KBM-7 (cell line): ENCODE measurements at regions of chr3 and their contacts with region 1.

Region 1: GRCh38 chr3:149969940-149970715 is 567 bp downstream of the PFN2 start:
- DNase-seq: peak; percentile 79

Region 2: GRCh38 chr3:150194513-150194912 is 224.4 kb after region 1 on chr3:
- in situ Hi-C with region 1: no loop called
- DNase-seq: no peak

Region 3: DNA sequence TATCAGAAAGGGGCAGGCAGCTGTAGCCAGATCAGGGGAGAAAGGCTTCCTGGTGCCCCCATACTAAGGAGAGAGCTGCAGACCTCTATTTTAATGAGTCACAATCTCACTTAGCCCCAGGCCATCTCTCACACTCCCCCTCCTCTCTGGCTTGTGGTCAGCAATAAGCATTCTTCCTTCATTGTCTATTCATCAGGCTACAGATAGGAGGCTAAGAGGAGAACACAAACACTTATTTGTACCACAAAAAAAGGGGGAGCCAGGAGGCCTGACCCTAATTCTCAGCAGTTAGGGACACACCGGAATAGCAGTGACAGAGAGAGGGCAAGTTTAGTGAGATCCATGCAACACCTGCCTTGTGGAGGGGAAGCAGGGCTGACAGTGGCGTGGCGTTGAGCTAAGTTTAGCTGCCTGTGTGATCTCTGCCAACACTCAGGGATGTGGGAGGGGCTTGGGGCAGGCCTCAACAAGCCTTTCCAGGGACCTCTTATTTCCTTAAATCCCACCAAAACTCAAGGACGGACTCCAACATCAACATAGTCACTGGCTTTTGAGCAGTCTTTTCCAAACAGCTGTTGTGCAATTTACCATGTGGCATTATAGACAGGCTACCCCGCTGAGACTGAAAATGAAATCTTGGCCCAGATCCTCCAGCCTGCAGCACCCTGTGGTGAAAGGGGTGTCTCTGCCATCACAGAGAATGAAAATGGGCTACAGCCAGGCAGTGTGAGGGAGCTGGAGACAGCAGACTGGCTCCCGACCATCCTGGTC is 246.1 kb after region 1 on chr3:
- in situ Hi-C with region 1: loop called (anchors 25 kb)
- DNase-seq: peak; percentile 12

Region 4: DNA sequence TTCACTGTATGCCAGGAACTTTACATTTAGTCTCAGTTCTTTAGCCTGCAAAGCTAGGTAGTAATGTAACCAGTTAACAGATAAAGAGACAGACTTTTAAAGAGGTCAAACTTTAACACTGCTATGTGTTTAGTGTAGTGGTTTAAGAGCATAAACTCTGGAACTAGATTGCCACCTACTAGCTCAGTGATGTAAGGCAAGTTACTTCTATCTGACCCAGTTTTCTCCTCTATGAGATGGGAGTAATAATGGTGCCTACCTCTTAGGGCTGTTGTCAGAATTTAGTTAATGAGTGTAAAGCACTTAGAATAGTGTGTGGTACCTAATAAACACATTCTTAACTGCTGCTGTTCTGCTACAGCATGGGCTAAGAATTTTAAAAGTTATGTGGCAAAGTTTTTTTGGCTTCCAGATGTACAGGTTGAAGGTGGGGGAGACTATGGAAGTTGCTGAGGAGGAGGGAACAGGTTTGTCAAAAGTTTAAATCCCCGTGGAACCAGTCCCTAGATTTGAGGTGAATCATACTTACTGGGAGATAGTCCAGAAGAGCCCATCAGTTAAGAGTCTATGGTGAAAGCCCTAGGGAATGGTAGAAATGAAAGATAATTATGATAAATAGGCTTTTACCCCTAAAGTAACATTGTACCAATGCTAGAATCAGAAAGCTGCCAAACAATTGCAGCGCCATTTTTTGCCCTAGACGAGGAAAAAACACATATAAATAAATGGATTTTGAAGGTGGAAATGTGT is 451.8 kb after region 1 on chr3:
- in situ Hi-C with region 1: no loop called
- DNase-seq: no peak